ENCODE measurements at regions of chrX and their contacts with region 1.

Region 1: DNA sequence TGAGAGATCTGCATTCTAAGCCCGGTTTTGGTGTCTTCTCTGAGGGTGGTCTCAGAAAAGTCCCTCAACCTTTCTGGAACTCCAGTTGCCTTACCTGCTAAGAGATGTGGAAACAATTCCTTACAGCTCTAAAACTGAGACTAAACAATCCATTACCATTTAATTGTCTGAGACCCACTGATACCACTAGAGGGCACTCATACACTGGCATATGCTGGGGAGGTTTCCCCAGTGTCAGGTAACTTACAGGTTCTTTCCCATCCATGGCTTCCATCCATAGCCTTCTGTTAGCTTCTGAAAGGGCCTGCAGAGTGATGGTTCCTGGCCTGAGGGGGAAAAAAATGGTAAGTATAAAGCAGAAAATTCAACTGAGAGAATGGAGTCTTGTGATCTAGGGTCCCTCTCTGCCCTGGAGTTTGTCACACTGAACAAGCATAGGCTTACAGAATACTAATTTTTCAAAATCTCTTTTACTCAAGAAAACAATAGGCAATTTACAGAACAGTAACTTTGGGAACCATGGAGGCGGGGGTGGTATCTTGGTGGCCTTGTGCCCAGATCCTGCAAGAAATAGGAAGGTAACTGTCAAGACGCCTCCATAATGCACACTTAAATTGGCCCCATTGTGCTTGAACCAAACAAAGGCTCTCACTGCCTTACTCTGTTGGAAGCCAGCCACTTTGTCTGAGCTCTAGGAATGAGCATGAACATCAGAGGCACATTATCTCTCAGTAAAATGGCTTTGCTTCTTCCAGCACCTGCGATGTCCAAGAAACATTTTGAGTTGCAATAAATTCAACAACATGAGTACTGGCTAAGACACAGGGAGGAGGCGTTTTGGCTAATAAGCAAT is 236.1 kb downstream of the OPHN1 start:
- DNase-seq: peak; percentile 56
- H3K4me3 Mint-ChIP-seq: no peak overlapping the region
- H3K27ac Mint-ChIP-seq: no peak overlapping the region
- H3K4me1 Mint-ChIP-seq: no peaks in the 10 kb centered on the region
- H3K27me3 Mint-ChIP-seq: no peaks in the 10 kb centered on the region
- CTCF ChIP-seq: no peak

Region 2: DNA sequence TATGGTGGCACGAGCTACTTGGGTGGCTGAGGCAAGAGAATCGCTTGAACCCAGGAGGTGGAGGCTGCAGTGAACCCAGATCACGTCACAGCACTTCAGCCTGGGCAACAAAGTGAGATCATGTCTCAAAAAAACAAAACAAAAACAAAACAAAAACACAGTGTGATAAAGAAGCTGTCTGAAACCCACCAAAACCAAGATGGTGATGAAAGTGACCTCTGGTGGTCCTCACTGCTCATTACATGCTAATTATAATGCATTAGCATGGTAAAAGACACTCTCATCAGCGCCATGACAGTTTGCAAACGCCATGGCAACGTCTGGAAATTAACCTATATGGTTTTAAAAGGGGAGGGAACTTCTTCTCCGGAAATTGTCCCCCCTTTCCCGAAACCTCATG is 265.5 kb after region 1 on chrX:
- CTCF ChIA-PET with region 1: interaction called, 11 read pairs
- intact Hi-C with region 1: loop called (anchors 1 kb)
- DNase-seq: peak; percentile 37
- H3K4me3 Mint-ChIP-seq: no peak overlapping the region
- H3K27ac Mint-ChIP-seq: no peak overlapping the region
- H3K4me1 Mint-ChIP-seq: no peaks in the 10 kb centered on the region
- H3K27me3 Mint-ChIP-seq: no peaks in the 10 kb centered on the region
- CTCF ChIP-seq: peak; percentile 25

Region 3: DNA sequence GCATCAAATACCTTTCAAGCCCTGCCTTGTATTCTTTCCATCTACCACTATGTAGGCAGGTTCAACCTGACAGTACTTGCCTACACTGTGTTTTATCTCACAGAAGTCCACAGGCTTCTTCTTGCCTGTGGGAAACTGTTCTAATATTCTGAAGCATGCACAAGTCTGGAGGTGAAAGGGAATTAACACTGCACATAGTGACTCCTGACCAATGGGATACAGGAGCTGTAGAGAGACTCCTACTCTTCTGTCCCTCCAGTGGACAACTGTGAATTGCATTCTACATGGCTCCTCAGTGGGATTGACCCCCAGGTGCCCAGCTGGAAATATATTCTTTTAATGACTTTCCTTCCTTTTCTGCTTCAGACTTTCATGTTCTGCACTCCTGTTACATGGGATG is 293.4 kb after region 1 on chrX:
- CTCF ChIA-PET with region 1: interaction called, 17 read pairs
- intact Hi-C with region 1: loop called (anchors 1 kb)
- DNase-seq: peak; percentile 41
- H3K4me3 Mint-ChIP-seq: peak overlapping the region; percentile 33
- H3K27ac Mint-ChIP-seq: peak overlapping the region; percentile 55
- H3K4me1 Mint-ChIP-seq: peaks cover 17% of the 10 kb centered on the region
- H3K27me3 Mint-ChIP-seq: no peaks in the 10 kb centered on the region
- CTCF ChIP-seq: peak; percentile 26

Region 4: DNA sequence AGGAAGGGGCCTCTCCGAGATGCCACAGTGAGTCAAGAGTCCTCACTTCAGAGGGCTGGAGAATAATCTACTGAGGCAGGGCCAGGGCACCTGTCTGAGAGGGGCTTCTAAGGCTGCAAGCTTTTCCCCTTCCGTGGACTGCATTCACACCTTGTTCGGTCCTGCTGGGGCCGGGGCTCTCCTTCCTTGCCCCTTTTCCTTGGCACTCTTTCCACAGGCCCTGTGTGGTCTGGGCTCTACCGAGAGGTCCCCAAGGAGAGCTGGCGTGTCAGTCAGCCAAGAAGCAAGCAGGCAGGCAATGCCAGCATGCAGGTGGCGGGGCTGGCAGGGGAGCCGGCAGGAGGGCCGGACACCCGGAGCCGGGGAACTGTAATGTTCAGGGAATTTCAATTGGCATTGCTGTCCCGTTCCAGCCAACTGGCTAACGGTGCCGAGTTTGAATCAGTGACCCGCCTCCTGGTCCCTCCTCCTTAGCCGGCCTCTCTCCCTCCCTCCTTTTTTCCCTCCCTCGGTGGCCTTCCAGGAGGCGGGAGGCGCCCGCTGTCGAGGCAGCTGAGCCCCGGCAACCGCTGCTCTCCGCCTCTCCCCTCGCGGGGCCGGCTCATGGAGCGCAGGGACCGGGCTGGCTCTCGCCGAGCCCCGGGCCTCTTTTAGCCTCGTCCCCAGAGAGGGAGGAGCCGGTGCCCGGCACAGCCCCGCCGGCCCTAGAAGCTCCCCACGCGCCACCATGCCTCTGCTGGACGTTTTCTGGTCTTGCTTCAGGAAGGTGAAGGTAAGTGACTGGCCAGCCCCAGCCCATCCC is 450.2 kb after region 1 on chrX and contains the start of gene STARD8:
- CTCF ChIA-PET with region 1: no interaction called
- intact Hi-C with region 1: no loop called
- DNase-seq: peak; percentile 63
- H3K4me3 Mint-ChIP-seq: peak within 1 kb of the TSS; percentile 28
- H3K27ac Mint-ChIP-seq: no peak within 1 kb of the TSS
- H3K4me1 Mint-ChIP-seq: peaks cover 7% of the 10 kb centered on the region
- H3K27me3 Mint-ChIP-seq: peaks cover 15% of the 10 kb centered on the region
- CTCF ChIP-seq: no peak
- total RNA-seq, gene STARD8: 0.45 and 0.47 TPM in 2 replicates

Region 5: DNA sequence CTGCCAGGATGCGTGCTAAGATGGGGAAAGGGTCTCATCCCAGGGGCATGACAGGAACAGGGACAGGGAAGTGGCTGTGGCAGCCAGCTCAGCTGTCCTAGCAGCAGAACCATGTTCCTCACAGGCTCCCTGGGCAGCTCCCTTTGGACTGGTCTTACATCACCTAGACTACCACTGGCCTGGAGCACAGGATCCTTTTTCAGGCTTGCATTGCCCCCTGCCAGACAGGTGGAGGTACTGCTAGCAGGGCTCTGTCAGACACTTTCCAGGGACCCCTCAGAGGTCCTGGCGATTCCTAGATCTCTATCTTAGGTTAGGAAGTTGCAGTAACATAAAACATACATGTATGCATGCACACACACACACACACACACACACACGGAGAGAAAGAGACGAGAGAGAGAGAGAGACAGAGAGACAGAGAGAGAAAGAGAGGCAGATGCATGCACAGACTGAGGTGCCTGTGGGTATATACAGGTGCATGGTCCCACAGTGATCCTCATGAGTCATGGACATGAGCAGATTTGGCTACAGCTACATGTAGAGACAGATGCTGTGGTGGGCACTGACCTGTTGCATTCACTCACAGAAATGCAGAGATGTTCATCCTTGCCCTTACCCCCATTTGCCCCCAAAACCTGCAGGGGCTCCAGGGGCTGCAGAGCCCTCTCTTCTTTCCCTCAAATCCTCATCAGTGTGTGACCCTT is 513.9 kb after region 1 on chrX:
- CTCF ChIA-PET with region 1: interaction called, 22 read pairs
- intact Hi-C with region 1: loop called (anchors 2 kb)
- DNase-seq: peak; percentile 57
- H3K4me3 Mint-ChIP-seq: no peak overlapping the region
- H3K27ac Mint-ChIP-seq: no peak overlapping the region
- H3K4me1 Mint-ChIP-seq: no peaks in the 10 kb centered on the region
- H3K27me3 Mint-ChIP-seq: peaks cover 34% of the 10 kb centered on the region
- CTCF ChIP-seq: peak; percentile 59

Region 6: DNA sequence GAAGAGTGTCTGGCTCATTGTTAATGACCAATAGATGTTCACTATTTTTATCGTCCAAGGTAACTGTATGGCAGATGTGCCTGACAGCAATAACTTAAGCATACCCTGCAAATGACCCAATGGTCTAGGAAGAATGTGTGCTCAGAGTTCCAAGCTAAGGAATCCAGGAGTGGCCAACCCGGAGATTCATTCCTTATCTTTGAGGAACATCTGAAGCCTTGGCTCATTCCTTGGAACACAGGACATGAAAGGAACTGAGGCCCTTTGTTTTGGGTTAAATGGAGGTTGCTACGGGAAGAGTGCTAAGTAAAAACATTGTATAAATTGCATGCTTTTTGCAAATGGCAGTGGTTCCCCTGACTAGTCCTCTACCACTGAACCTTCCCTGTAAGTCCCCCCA is 592.8 kb after region 1 on chrX:
- CTCF ChIA-PET with region 1: no interaction called
- intact Hi-C with region 1: no loop called
- DNase-seq: no peak
- H3K4me3 Mint-ChIP-seq: no peak overlapping the region
- H3K27ac Mint-ChIP-seq: no peak overlapping the region
- H3K4me1 Mint-ChIP-seq: no peaks in the 10 kb centered on the region
- H3K27me3 Mint-ChIP-seq: peaks cover 64% of the 10 kb centered on the region
- CTCF ChIP-seq: no peak

Region 7: DNA sequence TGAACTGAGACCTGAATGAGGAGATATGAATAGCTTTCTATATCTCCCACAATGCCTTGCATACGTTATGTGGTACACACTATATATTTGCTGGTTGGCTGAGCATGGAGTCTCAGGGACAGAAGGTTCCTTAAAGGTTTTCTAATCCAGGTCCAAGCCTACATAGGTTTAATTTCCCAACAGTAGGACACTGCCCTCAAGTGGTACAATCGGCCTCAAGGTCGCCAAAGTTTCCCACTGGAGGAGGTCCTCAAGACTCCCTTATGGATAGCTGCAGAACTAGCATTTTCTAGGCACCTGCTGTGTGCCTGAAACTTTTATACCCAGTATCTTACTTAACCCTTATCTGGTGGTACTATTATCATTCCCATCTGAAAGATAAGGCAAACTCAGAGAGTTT is 610.7 kb after region 1 on chrX:
- CTCF ChIA-PET with region 1: no interaction called
- intact Hi-C with region 1: loop called (anchors 2 kb)
- DNase-seq: no peak
- H3K4me3 Mint-ChIP-seq: no peak overlapping the region
- H3K27ac Mint-ChIP-seq: no peak overlapping the region
- H3K4me1 Mint-ChIP-seq: no peaks in the 10 kb centered on the region
- H3K27me3 Mint-ChIP-seq: peaks cover 21% of the 10 kb centered on the region
- CTCF ChIP-seq: peak; percentile 16